ENCODE measurements at regions of chr3 and their contacts with region 1.

Region 1: GRCh38 chr3:39288300-39288808 is 8.5 kb upstream of the CX3CR1 start:
- DNase-seq: peak; percentile 91
- H3K4me3 Mint-ChIP-seq: no peak overlapping the region
- H3K27ac Mint-ChIP-seq: no peak overlapping the region
- H3K4me1 Mint-ChIP-seq: peaks cover 12% of the 10 kb centered on the region
- H3K27me3 Mint-ChIP-seq: no peaks in the 10 kb centered on the region

Region 2: DNA sequence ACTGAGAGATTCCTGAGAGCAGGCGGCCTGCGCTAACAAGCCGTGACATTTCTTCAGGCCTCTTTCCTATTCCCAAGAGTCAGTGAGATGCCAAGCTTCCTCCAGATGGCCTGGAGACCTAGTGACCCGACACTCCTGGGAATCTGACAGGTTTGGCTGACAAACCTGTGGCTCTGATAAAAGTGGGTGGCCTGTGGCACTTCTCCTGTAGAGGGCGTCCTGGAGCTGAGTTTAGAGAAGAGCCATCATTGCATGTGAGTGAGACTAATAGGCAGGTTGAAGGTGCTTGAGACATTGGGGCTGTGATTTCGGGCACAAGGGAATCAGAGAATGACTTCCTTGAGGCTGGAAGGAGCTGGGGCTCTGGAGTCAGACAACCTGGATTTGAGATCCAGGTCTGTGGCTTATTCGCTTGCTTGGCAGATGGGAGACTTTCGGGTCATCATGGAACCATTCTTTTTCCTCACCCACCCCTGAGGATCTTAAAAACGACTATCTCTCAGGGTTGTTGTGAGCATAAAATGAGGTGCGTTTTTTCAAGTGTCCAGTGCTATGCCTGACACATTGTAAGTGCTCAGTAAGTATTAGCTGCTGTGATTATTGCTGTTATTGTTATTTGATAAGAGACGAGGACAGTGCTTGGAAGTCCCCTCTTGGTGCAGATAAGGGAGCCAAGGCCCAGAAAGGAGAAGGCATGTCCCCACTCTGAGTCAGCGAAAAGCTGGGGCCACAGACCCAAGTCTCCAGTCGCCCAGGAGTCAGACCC is 549.5 kb before region 1 on chr3:
- CTCF ChIA-PET with region 1: no interaction called
- intact Hi-C with region 1: loop called (anchors 1 kb)
- DNase-seq: peak; percentile 66
- H3K4me3 Mint-ChIP-seq: no peak overlapping the region
- H3K27ac Mint-ChIP-seq: no peak overlapping the region
- H3K4me1 Mint-ChIP-seq: no peaks in the 10 kb centered on the region
- H3K27me3 Mint-ChIP-seq: peaks cover 4% of the 10 kb centered on the region

Region 3: DNA sequence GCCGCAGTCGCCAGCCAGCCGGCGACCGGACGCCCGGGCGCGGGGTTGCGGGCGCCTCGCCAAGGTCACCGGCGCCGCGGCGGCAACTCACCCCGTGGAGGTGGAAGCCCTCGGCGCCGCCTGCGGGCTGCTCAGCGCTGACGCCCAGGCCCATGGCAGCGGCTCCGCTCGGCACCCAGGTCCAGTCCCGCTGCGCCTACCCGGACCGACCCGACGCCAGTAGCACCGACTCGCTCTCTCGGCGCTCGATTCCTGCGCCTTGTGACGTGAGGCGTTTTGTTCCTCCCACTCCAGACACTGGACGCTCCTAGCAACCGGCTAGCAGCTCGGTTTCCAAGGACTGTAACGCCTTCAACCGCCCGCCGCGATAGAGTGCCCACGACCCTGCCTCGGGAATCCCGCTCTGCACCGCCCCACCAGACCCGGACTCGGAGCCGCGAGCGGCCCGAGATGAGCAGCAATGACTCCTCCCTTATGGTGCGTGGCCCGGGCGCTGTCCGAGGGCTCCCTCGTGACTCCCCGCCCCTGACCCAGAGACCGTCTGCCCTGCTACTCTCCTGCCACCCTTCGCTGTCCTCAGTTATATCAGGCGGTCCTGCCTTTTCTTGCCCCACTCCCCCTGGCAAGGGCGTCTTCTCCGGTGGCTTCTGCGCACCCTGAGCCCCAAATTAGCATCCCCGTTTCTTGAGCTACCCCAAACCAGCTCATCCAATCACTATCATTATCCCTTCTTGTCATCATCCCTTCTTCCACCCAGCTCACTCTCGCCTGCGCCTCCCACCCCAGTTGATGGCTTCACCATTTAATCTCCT is 180.8 kb before region 1 on chr3 and contains the starts of genes GORASP1 and TTC21A:
- CTCF ChIA-PET with region 1: interaction called, 111 read pairs
- intact Hi-C with region 1: loop called (anchors 1 kb)
- DNase-seq: peak; percentile 79
- H3K4me3 Mint-ChIP-seq: peak within 1 kb of the TSS; percentile 83
- H3K27ac Mint-ChIP-seq: peak within 1 kb of the TSS; percentile 57
- H3K4me1 Mint-ChIP-seq: peaks cover 42% of the 10 kb centered on the region
- H3K27me3 Mint-ChIP-seq: no peaks in the 10 kb centered on the region
- total RNA-seq, gene GORASP1: 19.0 to 21.8 TPM
- total RNA-seq, gene TTC21A: 1.5 to 1.6 TPM

Region 4: GRCh38 chr3:39196671-39197356 is 91.5 kb before region 1 on chr3:
- CTCF ChIA-PET with region 1: interaction called, 359 read pairs
- intact Hi-C with region 1: no loop called
- DNase-seq: no peak
- H3K4me3 Mint-ChIP-seq: no peak overlapping the region
- H3K27ac Mint-ChIP-seq: no peak overlapping the region
- H3K4me1 Mint-ChIP-seq: peaks cover 36% of the 10 kb centered on the region
- H3K27me3 Mint-ChIP-seq: no peaks in the 10 kb centered on the region

Region 5: DNA sequence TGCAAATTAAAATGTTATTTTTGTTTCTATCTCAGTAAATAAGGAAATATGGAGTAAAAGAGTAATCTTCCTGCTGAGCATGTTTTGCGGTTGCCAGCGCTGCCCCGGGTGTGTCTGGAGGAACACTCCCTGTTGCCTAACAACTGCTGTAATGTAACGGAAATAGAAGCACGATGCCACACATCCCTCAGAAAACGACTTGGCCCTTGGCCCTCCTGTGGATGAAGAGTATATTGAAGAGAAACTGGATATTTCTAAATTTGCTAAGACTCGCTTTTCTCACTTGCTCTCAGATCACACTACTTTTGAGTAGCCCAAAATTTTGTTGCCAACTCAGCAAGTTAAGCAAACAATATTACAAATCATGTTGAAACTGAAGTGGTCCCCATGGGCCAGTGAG is 27.4 kb before region 1 on chr3:
- CTCF ChIA-PET with region 1: interaction called, 22 read pairs
- intact Hi-C with region 1: no loop called
- DNase-seq: peak; percentile 78
- H3K4me3 Mint-ChIP-seq: no peak overlapping the region
- H3K27ac Mint-ChIP-seq: no peak overlapping the region
- H3K4me1 Mint-ChIP-seq: peaks cover 20% of the 10 kb centered on the region
- H3K27me3 Mint-ChIP-seq: peaks cover 8% of the 10 kb centered on the region

Region 6: DNA sequence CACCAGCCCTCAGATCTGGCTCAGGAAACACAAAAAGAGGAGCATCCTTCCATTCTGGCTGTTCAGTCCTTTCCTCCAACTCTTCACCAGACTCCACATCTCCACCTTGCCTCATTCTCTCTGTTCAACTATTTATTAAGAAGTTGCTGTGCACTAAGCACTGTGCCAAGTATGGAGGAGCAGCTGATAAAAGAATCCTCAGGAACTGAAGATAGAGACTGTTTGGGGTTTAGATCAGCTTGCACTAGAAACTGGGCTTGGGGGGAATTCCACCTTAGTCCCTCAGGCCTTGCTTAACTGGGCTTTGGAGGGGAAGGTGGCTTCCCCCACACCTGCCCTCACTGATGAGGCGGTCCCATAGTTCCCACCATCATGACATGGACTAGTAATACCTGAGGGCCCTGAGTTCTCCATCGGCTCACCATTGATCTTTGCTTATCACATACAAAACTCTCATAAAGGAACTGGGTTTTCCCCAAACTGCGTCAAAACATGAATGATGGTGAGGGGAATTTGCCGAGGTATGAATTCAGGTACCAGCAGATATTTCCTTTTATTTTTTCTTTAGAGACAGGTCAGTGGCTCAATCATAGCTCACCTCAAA is 39.5 kb after region 1 on chr3:
- CTCF ChIA-PET with region 1: interaction called, 17 read pairs
- intact Hi-C with region 1: no loop called
- DNase-seq: peak; percentile 60
- H3K4me3 Mint-ChIP-seq: no peak overlapping the region
- H3K27ac Mint-ChIP-seq: no peak overlapping the region
- H3K4me1 Mint-ChIP-seq: peaks cover 30% of the 10 kb centered on the region
- H3K27me3 Mint-ChIP-seq: no peaks in the 10 kb centered on the region

Region 7: GRCh38 chr3:39378088-39378487 is 89.7 kb after region 1 on chr3:
- CTCF ChIA-PET with region 1: interaction called, 81 read pairs
- intact Hi-C with region 1: loop called (anchors 1 kb)
- DNase-seq: peak; percentile 78
- H3K4me3 Mint-ChIP-seq: no peak overlapping the region
- H3K27ac Mint-ChIP-seq: no peak overlapping the region
- H3K4me1 Mint-ChIP-seq: peaks cover 4% of the 10 kb centered on the region
- H3K27me3 Mint-ChIP-seq: no peaks in the 10 kb centered on the region